B cell (primary cell): ENCODE measurements at regions of chr1 and their contacts with region 1.

Region 1: DNA sequence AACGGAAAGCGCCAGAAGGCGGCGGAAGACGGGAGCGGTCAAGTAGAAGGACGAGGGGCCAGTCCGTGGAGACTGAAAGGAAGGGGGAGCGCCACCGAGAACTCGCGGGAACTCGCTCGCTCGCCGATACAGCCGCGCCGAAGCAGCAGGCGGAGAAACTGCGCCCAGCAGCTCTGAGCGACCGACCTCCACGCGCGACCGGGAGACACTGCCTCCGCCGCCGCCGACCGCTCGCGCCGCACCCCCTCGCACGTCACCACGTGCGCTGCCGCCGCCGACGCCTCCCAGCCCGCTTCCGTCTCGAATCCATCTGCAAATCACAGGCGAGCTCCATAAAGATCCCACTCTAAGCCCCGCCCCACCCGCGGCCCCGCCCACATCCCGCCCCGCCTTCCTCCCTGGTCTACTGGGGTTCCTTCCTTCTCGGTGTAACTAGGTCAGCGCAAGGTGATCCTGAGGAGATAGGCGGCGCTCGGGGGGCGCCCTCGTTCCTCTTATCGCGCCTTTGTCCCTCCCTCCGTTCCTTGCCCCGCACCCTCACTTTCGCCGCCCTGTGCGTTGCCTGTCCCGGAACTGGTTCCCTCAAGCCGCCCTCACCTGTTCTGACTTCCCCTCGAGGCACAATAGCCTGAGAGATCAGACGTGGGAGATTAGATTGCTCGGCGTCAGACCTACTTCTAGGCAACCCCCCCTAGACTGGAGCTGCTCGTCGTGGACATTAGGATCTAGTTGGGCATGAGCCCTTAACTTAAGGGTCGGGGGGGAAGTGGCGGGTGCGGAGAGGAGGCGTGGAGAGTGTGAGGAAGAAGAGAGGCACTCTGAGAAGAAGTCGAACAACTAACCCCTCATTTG is at the start of gene IVNS1ABP:
- DNase-seq: peak; percentile 98
- ATAC-seq: peak; percentile 76
- H3K4me3 ChIP-seq: peak within 1 kb of the TSS; percentile 94 to 98 (median 96)
- H3K4me3 Mint-ChIP-seq: peak within 1 kb of the TSS; percentile 92
- H3K27ac ChIP-seq: peak within 1 kb of the TSS; percentile 95 to 98
- H3K27ac Mint-ChIP-seq: peak within 1 kb of the TSS; percentile 98
- H3K4me1 ChIP-seq: peaks cover 34 to 41% of the 10 kb centered on the region in 2 donors
- H3K4me1 Mint-ChIP-seq: peaks cover 49% of the 10 kb centered on the region
- H3K27me3 ChIP-seq: no peaks in the 10 kb centered on the region
- H3K27me3 Mint-ChIP-seq: no peaks in the 10 kb centered on the region
- CTCF ChIP-seq: peak; percentile 39
- total RNA-seq, gene IVNS1ABP: 87.0 and 93.8 TPM in 2 replicates

Region 2: DNA sequence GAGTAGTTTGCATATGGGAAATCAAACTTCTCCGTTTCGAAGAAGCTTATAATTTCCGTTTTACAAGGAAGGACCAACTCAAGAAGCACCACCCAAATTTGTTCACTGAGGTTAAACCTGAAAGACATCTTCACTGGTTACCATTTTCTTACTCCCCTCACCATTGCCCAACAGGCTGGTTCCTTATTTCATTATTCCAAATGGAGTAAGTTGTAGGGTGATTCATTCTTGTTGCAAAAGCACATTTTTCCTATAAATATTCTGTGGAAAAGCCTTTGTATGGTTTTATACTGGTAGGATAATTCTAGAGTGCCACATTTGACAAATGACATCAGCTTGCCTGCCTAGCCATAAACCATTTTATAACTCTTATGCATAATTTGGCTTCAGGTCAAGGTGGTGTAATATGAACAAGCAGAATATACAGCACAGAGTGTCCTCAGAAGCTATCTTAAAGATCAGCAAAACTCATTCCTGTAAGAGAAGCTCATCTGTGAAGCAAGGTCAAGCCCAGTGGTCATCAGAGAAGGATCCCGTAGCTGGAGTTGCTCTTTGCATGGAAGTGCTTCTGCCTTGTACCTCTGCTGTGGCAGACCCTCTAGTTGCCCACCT is 954.5 kb before region 1 on chr1:
- CTCF ChIA-PET with region 1: no interaction called
- POLR2A ChIA-PET with region 1: no interaction called
- intact Hi-C with region 1: no loop called
- DNase-seq: no peak
- ATAC-seq: no peak
- H3K4me3 ChIP-seq: no peak overlapping the region
- H3K4me3 Mint-ChIP-seq: no peak overlapping the region
- H3K27ac ChIP-seq: no peak overlapping the region
- H3K27ac Mint-ChIP-seq: no peak overlapping the region
- H3K4me1 ChIP-seq: no peaks in the 10 kb centered on the region
- H3K4me1 Mint-ChIP-seq: no peaks in the 10 kb centered on the region
- H3K27me3 ChIP-seq: no peaks in the 10 kb centered on the region
- H3K27me3 Mint-ChIP-seq: peaks cover 4% of the 10 kb centered on the region
- CTCF ChIP-seq: no peak

Region 3: GRCh38 chr1:185044981-185045813 is 272.1 kb before region 1 on chr1 and contains the start of gene RNF2:
- CTCF ChIA-PET with region 1: no interaction called
- POLR2A ChIA-PET with region 1: no interaction called
- intact Hi-C with region 1: loop called (anchors 1 kb)
- DNase-seq: peak; percentile 93
- ATAC-seq: peak; percentile 92
- H3K4me3 ChIP-seq: peak within 1 kb of the TSS; percentile 77 to 96 (median 89)
- H3K4me3 Mint-ChIP-seq: peak within 1 kb of the TSS; percentile 87
- H3K27ac ChIP-seq: peak within 1 kb of the TSS; percentile 72 to 82
- H3K27ac Mint-ChIP-seq: peak within 1 kb of the TSS; percentile 93
- H3K4me1 ChIP-seq: peaks cover 16 to 18% of the 10 kb centered on the region in 2 donors
- H3K4me1 Mint-ChIP-seq: peaks cover 35% of the 10 kb centered on the region
- H3K27me3 ChIP-seq: no peaks in the 10 kb centered on the region
- H3K27me3 Mint-ChIP-seq: no peaks in the 10 kb centered on the region
- CTCF ChIP-seq: no peak
- total RNA-seq, gene RNF2: 24.2 and 29.5 TPM in 2 replicates

Region 4: GRCh38 chr1:185345913-185346720 is 28.9 kb after region 1 on chr1:
- CTCF ChIA-PET with region 1: interaction called, 3 read pairs
- POLR2A ChIA-PET with region 1: interaction called, 4 read pairs
- intact Hi-C with region 1: loop called (anchors 1 kb)
- DNase-seq: peak; percentile 40
- ATAC-seq: peak; percentile 74
- H3K4me3 ChIP-seq: peak overlapping the region in 1 of 5 experiments; percentile 5
- H3K4me3 Mint-ChIP-seq: peak overlapping the region; percentile 68
- H3K27ac ChIP-seq: peak overlapping the region in 1 of 2 donors; percentile 28
- H3K27ac Mint-ChIP-seq: peak overlapping the region; percentile 83
- H3K4me1 ChIP-seq: peaks cover 21 to 22% of the 10 kb centered on the region in 2 donors
- H3K4me1 Mint-ChIP-seq: peaks cover 26% of the 10 kb centered on the region
- H3K27me3 ChIP-seq: no peaks in the 10 kb centered on the region
- H3K27me3 Mint-ChIP-seq: no peaks in the 10 kb centered on the region
- CTCF ChIP-seq: no peak

Region 5: DNA sequence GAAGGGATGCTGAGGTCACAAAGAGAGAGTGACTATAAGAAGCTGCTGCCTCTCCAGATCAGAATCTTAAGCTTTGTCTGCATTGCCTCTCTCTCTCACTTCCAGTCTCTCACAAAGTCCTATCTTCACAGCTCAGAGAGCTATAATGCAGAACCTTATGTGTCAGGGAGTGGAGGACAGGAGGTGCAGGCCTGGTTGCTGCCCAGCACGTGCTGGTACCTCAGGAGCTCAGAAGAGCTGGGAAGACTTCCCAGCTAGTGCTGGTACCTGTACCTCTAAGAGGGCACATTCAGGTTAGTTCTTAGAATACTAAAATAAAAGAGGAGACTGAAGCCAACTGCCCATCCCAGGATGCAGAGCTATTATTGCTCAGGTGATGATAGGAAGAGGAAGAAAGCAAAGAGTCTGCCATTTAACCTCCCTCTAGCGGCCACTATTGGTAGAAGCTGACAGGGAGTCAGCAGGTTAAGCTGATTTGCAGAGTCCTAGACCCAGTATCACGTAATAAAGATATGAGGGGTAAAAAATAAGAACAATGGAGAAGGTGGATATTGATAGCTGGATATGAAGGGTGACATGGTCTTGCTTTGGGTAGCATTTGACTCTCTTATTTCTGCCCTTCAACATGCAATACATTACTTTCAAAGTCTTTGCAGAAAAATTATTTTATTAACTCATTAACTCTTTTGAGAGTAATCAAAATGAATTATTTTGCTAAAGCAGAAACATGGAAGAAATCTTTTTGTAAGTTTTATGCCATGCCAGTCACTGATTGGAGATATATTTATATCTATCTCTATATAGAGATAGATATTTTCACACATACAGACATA is 278.8 kb after region 1 on chr1:
- CTCF ChIA-PET with region 1: interaction called, 18 read pairs
- POLR2A ChIA-PET with region 1: interaction called, 7 read pairs
- intact Hi-C with region 1: no loop called
- DNase-seq: peak; percentile 67
- ATAC-seq: peak; percentile 81
- H3K4me3 ChIP-seq: no peak overlapping the region
- H3K4me3 Mint-ChIP-seq: no peak overlapping the region
- H3K27ac ChIP-seq: no peak overlapping the region
- H3K27ac Mint-ChIP-seq: no peak overlapping the region
- H3K4me1 ChIP-seq: peaks cover 14 to 26% of the 10 kb centered on the region in 2 donors
- H3K4me1 Mint-ChIP-seq: peaks cover 29% of the 10 kb centered on the region
- H3K27me3 ChIP-seq: no peaks in the 10 kb centered on the region
- H3K27me3 Mint-ChIP-seq: no peaks in the 10 kb centered on the region
- CTCF ChIP-seq: peak; percentile 76

Region 6: GRCh38 chr1:185681034-185681633 is 363.9 kb after region 1 on chr1:
- CTCF ChIA-PET with region 1: interaction called, 43 read pairs
- POLR2A ChIA-PET with region 1: interaction called, 6 read pairs
- intact Hi-C with region 1: no loop called
- DNase-seq: peak; percentile 64
- ATAC-seq: peak; percentile 47
- H3K4me3 ChIP-seq: no peak overlapping the region
- H3K4me3 Mint-ChIP-seq: no peak overlapping the region
- H3K27ac ChIP-seq: no peak overlapping the region
- H3K27ac Mint-ChIP-seq: no peak overlapping the region
- H3K4me1 ChIP-seq: peaks cover 9 to 11% of the 10 kb centered on the region in 2 donors
- H3K4me1 Mint-ChIP-seq: peaks cover 19% of the 10 kb centered on the region
- H3K27me3 ChIP-seq: peaks cover 0 to 2% (median 0%) of the 10 kb centered on the region in 4 experiments
- H3K27me3 Mint-ChIP-seq: no peaks in the 10 kb centered on the region
- CTCF ChIP-seq: peak; percentile 68

Region 7: DNA sequence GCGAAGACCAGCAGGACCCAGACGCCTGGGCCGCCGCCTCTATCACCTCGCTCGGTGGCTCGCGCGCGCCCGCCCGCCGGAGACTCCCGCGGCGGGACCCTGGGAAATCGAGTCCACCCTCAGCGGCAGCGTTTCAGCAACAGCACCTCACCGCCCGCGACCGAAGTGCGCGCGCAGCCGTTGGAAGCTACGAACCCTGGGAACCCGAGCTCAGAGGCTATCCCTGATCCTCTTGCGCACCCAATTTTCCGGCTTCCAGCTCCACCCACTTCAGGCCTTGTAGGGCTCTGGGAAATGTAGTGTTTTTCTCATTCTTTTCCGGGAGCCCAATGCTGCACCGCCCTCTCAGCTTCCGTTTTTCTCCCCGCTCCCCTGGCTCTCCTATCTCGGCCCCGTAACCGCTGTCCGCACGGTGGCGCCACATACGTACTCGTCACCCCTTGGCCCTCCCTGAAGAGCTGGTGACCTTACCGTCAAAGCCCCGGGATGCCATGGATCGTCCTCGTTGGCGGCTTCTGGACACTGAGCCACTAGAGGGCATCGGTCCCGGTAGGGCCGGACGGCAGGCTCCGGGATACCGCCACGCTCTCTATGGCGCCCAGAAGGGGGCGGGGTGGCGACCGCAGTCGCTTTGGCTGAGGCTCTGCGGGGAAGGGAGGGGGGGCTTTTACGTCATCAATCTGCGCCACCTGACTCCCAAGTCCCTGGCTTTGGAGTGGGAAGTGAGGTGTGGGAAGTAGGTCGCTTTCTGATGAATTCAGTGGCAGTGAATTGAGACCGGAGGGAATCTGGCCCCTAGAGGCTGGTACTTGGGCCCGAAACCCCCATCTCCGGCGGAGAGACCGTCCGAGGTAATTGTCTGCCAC is 1058.1 kb after region 1 on chr1 and contains the starts of genes ODR4 and TPR:
- CTCF ChIA-PET with region 1: no interaction called
- POLR2A ChIA-PET with region 1: no interaction called
- intact Hi-C with region 1: loop called (anchors 2 kb)
- DNase-seq: peak; percentile 98
- ATAC-seq: peak; percentile 85
- H3K4me3 ChIP-seq: peak within 1 kb of the TSS; percentile 67 to 97 (median 91)
- H3K4me3 Mint-ChIP-seq: peak within 1 kb of the TSS; percentile 89
- H3K27ac ChIP-seq: peak within 1 kb of the TSS; percentile 76 to 96
- H3K27ac Mint-ChIP-seq: peak within 1 kb of the TSS; percentile 90
- H3K4me1 ChIP-seq: peaks cover 10 to 20% of the 10 kb centered on the region in 2 donors
- H3K4me1 Mint-ChIP-seq: peaks cover 27% of the 10 kb centered on the region
- H3K27me3 ChIP-seq: no peaks in the 10 kb centered on the region
- H3K27me3 Mint-ChIP-seq: no peaks in the 10 kb centered on the region
- CTCF ChIP-seq: peak; percentile 86
- total RNA-seq, gene ODR4: 15.0 and 17.2 TPM in 2 replicates
- total RNA-seq, gene TPR: 141 and 144 TPM in 2 replicates